ENCODE measurements at regions of chr5 and their contacts with region 1.

Region 1: DNA sequence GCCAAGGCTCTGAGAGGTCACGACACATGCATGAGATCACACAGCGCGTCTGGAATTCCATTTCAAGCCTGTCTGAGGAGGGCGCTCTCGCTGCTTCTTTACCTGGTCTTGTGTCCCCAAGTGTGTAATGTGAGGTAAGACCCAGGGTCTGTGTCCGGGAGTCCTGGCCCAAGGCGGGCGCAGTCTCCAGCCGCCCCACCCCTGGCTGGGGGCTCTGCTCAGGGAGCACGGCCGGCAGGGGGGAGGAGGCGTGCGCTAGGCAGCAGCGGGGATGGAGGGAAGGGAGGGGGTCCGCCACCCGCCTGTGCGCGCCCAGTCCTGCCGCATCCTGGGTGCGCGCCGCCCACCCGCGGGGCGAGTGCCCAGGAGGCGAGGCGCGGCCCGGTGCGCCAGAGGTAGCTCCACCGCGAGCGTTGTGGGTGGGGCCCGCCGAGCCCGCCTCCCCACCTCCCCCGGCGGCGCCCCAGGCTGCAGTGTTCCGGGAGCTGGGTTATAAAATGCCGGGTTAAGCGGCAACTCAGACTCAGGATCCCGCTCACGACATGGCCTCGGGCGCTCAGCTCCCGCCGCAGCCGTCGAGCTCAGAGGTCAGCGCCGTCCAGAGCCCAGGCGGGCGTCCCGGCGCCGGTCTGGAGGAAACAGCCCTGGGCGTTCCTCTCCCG is at the start of gene CCNI2:
- DNase-seq: no peak
- H3K4me3 ChIP-seq: peak within 1 kb of the TSS; percentile 49 to 68
- H3K27ac ChIP-seq: peak within 1 kb of the TSS in 1 of 2 donors; percentile 24
- H3K4me1 ChIP-seq: peaks cover 3 to 4% of the 10 kb centered on the region in 2 donors
- H3K27me3 ChIP-seq: no peaks in the 10 kb centered on the region
- CTCF ChIP-seq: peak in 2 of 3 experiments; percentile 28 to 46
- total RNA-seq, gene CCNI2: not detected

Region 2: DNA sequence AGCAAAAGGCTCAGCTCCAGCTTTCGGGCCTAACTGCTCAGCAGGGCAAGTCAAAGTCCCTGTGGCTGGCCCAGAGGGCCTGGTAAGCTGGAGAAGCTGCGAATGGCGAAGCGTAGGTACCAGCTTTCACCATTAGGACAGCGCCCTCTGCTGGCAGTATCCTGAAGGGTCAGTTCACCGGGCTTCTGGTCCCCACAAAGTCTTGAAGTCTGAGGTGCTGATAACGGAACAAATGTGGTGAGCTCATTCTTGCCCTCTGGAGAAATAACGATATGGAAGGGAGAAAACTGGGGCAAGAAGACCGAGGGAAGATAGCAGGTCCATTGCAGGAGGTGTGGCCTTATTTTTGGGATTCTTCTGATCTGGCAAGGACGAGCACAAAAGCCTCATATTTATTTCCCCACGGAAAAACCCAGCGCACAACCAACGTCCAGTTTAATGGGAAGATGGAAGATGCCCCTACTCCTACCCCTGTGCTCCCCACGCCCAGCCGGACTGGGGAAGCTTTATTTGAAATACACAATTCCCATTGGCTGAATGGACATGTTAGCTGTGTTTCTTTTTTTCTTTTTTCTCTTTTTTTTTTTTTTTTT is 73.2 kb after region 1 on chr5:
- intact Hi-C with region 1: loop called (anchors 2 kb)
- DNase-seq: peak; percentile 46 to 96
- H3K4me3 ChIP-seq: no peak overlapping the region
- H3K27ac ChIP-seq: no peak overlapping the region
- H3K4me1 ChIP-seq: peaks cover 5 to 8% of the 10 kb centered on the region in 2 donors
- H3K27me3 ChIP-seq: no peaks in the 10 kb centered on the region
- CTCF ChIP-seq: peak; percentile 88 to 93 (median 93)

Measured in ascending aorta (tissue), 2 donors.